ENCODE measurements at regions of chr3 and their contacts with region 1.

Region 1: DNA sequence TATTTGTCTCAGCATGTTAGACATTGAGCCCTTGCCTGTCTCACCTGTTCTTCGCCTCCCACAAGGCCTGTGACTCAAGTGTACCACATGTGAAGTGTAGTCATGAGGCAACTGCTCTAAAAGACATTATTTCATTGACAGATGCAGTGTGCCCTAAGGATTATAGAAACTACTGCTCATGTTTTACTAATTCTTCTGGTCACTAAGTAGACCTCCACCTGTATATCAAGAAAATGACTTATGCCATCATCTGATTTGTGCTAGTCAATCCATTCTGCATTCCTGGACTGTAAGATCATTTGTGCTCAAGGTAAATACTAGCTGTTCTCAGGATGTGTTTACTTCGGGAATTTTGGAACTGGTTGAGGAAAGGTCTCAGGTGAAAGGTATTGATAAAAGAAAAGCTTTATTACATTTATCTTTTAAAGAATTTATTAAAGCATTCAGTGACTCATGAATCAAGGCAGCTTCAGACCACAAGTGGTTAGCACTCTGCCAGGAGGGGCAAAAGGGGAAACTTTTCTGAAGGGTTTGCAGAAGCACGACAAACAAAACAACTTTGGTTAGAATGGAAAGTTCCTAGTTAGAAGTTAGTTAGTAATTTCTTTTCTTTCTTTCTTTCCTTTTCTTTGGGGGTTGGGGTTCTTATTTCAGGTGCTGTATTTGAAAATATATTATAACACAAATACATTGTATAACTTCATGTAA is 465.3 kb upstream of the CBLB start:
- DNase-seq: peak; percentile 84
- ATAC-seq: peak; percentile 70
- H3K4me3 Mint-ChIP-seq: peak overlapping the region; percentile 67
- H3K27ac Mint-ChIP-seq: peak overlapping the region; percentile 97
- H3K4me1 Mint-ChIP-seq: peaks cover 89% of the 10 kb centered on the region
- H3K27me3 Mint-ChIP-seq: no peaks in the 10 kb centered on the region

Region 2: DNA sequence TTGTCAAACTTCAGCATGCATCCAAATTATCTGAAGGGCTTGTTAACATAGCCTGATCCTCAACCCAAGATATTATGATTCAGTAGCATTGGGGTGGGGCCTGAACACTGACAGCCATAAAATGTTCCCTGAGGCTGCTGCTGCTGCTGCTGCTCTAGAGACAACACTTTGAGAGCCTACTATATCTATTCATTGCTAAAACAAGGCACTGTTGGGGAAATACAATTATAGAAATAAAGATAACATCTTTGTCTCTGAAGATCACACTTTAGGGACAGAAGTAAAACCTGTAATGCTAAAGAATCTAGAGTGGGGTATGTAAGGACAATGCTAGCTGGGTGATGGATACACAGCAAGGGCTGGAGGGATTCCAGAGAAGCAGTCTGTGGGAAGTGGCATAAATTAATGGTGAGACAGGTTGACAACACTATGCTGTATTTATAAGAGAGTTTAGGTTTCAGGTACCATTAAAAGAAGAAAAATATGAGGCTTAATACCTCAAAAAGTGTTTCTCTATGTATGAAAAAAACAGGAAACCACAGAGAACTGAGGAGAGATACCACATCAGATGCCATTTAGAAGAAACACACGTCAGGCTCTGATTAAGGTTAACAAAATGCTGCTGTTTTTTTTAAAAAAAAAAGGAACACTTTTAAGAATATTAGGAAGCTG is 581.2 kb before region 1 on chr3:
- CTCF ChIA-PET with region 1: no interaction called
- POLR2A ChIA-PET with region 1: no interaction called
- intact Hi-C with region 1: loop called in 1 of 2 experiments (anchors 2 kb)
- DNase-seq: peak; percentile 55
- ATAC-seq: peak; percentile 76
- H3K4me3 Mint-ChIP-seq: peak overlapping the region; percentile 42
- H3K27ac Mint-ChIP-seq: peak overlapping the region; percentile 95
- H3K4me1 Mint-ChIP-seq: peaks cover 78% of the 10 kb centered on the region
- H3K27me3 Mint-ChIP-seq: no peaks in the 10 kb centered on the region

Region 3: GRCh38 chr3:105836533-105836932 is 497.5 kb before region 1 on chr3:
- CTCF ChIA-PET with region 1: no interaction called
- POLR2A ChIA-PET with region 1: interaction called, 3 read pairs
- intact Hi-C with region 1: loop called (anchors 1 kb)
- DNase-seq: peak; percentile 73
- ATAC-seq: peak; percentile 68
- H3K4me3 Mint-ChIP-seq: peak overlapping the region; percentile 15
- H3K27ac Mint-ChIP-seq: peak overlapping the region; percentile 81
- H3K4me1 Mint-ChIP-seq: peaks cover 80% of the 10 kb centered on the region
- H3K27me3 Mint-ChIP-seq: no peaks in the 10 kb centered on the region

Region 4: GRCh38 chr3:106119614-106120082 is 214.4 kb before region 1 on chr3:
- CTCF ChIA-PET with region 1: interaction called, 3 read pairs
- POLR2A ChIA-PET with region 1: interaction called, 4 read pairs
- intact Hi-C with region 1: loop called (anchors 1 to 2 kb)
- DNase-seq: peak; percentile 28
- ATAC-seq: peak; percentile 99
- H3K4me3 Mint-ChIP-seq: no peak overlapping the region
- H3K27ac Mint-ChIP-seq: peak overlapping the region; percentile 83
- H3K4me1 Mint-ChIP-seq: peaks cover 26% of the 10 kb centered on the region
- H3K27me3 Mint-ChIP-seq: no peaks in the 10 kb centered on the region

Region 5: DNA sequence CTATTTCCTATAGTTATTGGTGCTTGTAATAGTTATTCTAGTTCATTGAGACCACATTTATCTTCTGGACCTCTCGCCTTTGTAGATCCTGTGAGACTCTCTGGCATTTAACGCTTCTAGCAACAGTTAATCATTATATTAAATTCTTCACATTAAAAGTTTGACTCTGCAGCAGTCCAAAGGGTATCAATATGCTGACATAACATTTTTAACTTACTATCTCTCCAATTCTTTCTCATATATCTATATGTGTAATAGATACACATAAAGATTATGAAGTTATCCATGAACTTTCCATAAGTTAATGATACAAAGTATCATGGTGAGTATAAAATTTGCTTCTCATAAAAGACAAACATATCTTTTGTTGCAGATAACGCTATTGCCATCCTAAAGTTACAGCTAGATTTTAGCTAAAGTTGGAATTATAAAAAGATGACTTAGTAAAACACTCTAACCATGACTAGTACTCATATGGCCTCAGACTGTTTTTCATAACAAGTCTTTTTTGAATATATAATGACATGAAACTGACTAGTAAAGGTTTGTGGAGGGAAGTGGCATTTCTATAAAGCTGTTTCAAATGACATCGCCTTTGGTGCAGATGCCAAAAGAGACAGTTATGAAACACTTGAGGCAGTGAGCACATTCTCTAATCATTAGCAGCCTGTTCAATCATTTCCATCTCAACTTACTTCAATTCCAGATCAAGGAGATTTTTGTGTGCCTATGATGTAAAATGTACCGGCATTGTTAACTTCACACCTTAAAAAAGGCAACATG is 86.0 kb before region 1 on chr3:
- CTCF ChIA-PET with region 1: no interaction called
- POLR2A ChIA-PET with region 1: no interaction called
- intact Hi-C with region 1: loop called in 1 of 2 experiments (anchors 5 kb)
- DNase-seq: no peak
- ATAC-seq: peak; percentile 89
- H3K4me3 Mint-ChIP-seq: no peak overlapping the region
- H3K27ac Mint-ChIP-seq: no peak overlapping the region
- H3K4me1 Mint-ChIP-seq: peaks cover 11% of the 10 kb centered on the region
- H3K27me3 Mint-ChIP-seq: no peaks in the 10 kb centered on the region

Region 6: DNA sequence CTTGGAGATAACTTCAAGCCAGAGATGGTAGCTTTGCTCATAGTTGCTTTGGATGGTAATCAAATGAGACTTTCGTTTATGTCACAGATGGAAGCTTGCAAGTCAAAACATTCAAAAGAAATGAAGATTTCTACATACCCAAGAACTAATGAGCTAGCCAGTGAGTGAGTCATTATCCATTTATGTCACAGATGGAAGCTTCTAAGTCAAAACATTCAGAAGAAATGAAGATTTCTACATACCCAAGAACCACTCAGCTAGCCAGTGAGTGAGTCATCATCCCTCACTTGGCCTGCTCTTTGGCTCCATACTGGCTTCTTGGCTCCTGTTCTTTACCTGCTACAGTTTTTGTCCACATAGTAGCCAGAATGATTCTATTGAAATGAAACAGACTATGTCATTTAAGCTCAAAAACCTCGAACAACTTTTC is 94.5 kb after region 1 on chr3:
- CTCF ChIA-PET with region 1: interaction called, 9 read pairs
- POLR2A ChIA-PET with region 1: interaction called, 4 read pairs
- intact Hi-C with region 1: loop called (anchors 1 kb)
- DNase-seq: peak; percentile 73
- ATAC-seq: peak; percentile 82
- H3K4me3 Mint-ChIP-seq: no peak overlapping the region
- H3K27ac Mint-ChIP-seq: peak overlapping the region; percentile 98
- H3K4me1 Mint-ChIP-seq: peaks cover 49% of the 10 kb centered on the region
- H3K27me3 Mint-ChIP-seq: no peaks in the 10 kb centered on the region

Measured in activated CD4-positive, alpha-beta T cell treated with anti-CD3 and anti-CD28 coated beads for 36 hours (primary cell).